CD8-positive, alpha-beta memory T cell (primary cell): ENCODE measurements at regions of chr3 and their contacts with region 1.

Region 1: DNA sequence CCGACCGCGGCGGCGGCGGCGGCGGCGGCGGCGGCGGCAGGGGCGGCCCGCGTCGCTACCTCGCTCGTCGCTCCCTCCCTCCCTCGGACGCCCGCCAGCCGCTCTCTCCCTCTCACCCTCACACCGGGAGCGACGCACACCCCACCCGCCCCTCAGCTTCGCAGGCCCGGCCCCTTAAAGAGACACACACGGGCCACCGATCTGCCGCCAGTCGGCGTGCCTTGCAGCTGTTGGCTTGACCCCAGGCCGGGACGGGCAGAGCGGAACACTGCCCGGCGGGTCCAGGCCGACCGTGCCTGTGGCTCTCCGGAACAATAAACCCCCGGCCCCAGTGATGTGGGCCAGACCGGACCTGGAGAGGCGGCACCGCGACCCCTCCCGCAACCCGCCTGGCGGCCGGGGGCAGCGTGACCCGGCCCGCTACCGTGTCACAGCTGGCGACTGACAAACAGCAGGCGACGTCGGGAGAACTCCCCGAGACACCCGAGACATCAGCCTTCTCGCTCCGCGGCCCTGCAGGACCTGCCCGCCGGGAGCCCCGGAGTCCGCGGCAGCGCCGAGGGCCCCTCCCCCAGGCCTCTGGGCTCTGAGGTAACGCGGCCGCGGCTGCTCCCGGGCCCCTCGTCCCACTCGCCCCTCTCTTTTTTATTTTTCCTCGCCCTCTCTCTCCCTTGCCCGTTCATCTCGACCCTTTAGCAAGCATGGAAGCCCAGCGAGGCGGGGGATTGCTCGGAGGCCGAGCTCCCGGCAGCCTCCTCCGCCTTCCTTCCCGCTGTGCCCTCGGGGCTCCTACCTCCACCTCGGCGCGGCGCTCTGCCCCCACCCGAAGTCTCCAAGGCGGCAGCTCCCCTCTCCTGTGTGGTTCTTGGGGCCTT is at the start of gene SETD2:
- DNase-seq: peak; percentile 80 to 91 (median 83)
- H3K4me3 ChIP-seq: peak within 1 kb of the TSS; percentile 95
- H3K4me3 Mint-ChIP-seq: peak within 1 kb of the TSS; percentile 98 to 99 (median 99)
- H3K27ac ChIP-seq: peak within 1 kb of the TSS; percentile 94
- H3K27ac Mint-ChIP-seq: peak within 1 kb of the TSS; percentile 98 to 100 (median 100)
- H3K4me1 ChIP-seq: peaks cover 48% of the 10 kb centered on the region
- H3K4me1 Mint-ChIP-seq: peaks cover 44 to 57% (median 52%) of the 10 kb centered on the region in 3 donors
- H3K27me3 ChIP-seq: no peaks in the 10 kb centered on the region
- H3K27me3 Mint-ChIP-seq: peaks cover 0 to 2% of the 10 kb centered on the region in 2 donors
- total RNA-seq, gene SETD2: 32.4 to 32.8 TPM

Region 2: GRCh38 chr3:47145272-47145671 is 19.0 kb before region 1 on chr3:
- CTCF ChIA-PET with region 1: interaction called, 5 read pairs
- POLR2A ChIA-PET with region 1: interaction called, 10 read pairs
- DNase-seq: no peak
- H3K4me3 ChIP-seq: no peak overlapping the region
- H3K4me3 Mint-ChIP-seq: peak overlapping the region in 3 of 7 donors; percentile 16 to 28 (median 20)
- H3K27ac ChIP-seq: no peak overlapping the region
- H3K27ac Mint-ChIP-seq: peak overlapping the region in 1 of 8 donors; percentile 89
- H3K4me1 ChIP-seq: peaks cover 41% of the 10 kb centered on the region
- H3K4me1 Mint-ChIP-seq: peaks cover 59 to 75% (median 67%) of the 10 kb centered on the region in 3 donors
- H3K27me3 ChIP-seq: no peaks in the 10 kb centered on the region
- H3K27me3 Mint-ChIP-seq: peaks cover 0 to 2% of the 10 kb centered on the region in 2 donors

Region 3: GRCh38 chr3:47210863-47211405 is 46.7 kb after region 1 on chr3:
- CTCF ChIA-PET with region 1: no interaction called
- POLR2A ChIA-PET with region 1: interaction called, 11 read pairs
- DNase-seq: no peak
- H3K4me3 ChIP-seq: no peak overlapping the region
- H3K4me3 Mint-ChIP-seq: no peak overlapping the region
- H3K27ac ChIP-seq: no peak overlapping the region
- H3K27ac Mint-ChIP-seq: no peak overlapping the region
- H3K4me1 ChIP-seq: no peaks in the 10 kb centered on the region
- H3K4me1 Mint-ChIP-seq: no peaks in the 10 kb centered on the region
- H3K27me3 ChIP-seq: no peaks in the 10 kb centered on the region
- H3K27me3 Mint-ChIP-seq: no peaks in the 10 kb centered on the region

Region 4: GRCh38 chr3:47227678-47228077 is 63.4 kb after region 1 on chr3:
- CTCF ChIA-PET with region 1: no interaction called
- POLR2A ChIA-PET with region 1: no interaction called
- DNase-seq: no peak
- H3K4me3 ChIP-seq: no peak overlapping the region
- H3K4me3 Mint-ChIP-seq: no peak overlapping the region
- H3K27ac ChIP-seq: no peak overlapping the region
- H3K27ac Mint-ChIP-seq: peak overlapping the region in 1 of 8 donors; percentile 23
- H3K4me1 ChIP-seq: no peaks in the 10 kb centered on the region
- H3K4me1 Mint-ChIP-seq: no peaks in the 10 kb centered on the region
- H3K27me3 ChIP-seq: no peaks in the 10 kb centered on the region
- H3K27me3 Mint-ChIP-seq: no peaks in the 10 kb centered on the region

Region 5: GRCh38 chr3:47282424-47283192 is 118.4 kb after region 1 on chr3 and contains the starts of genes KIF9 and KLHL18:
- CTCF ChIA-PET with region 1: interaction called, 4 read pairs
- POLR2A ChIA-PET with region 1: interaction called, 16 read pairs
- DNase-seq: peak; percentile 96 to 99 (median 97)
- H3K4me3 ChIP-seq: peak within 1 kb of the TSS; percentile 97
- H3K4me3 Mint-ChIP-seq: peak within 1 kb of the TSS; percentile 91 to 100 (median 99)
- H3K27ac ChIP-seq: peak within 1 kb of the TSS; percentile 100
- H3K27ac Mint-ChIP-seq: peak within 1 kb of the TSS; percentile 96 to 100 (median 100)
- H3K4me1 ChIP-seq: peaks cover 41% of the 10 kb centered on the region
- H3K4me1 Mint-ChIP-seq: peaks cover 31 to 53% (median 48%) of the 10 kb centered on the region in 3 donors
- H3K27me3 ChIP-seq: no peaks in the 10 kb centered on the region
- H3K27me3 Mint-ChIP-seq: peaks cover 0 to 6% of the 10 kb centered on the region in 2 donors
- total RNA-seq, gene KIF9: 5.8 to 7.2 TPM
- total RNA-seq, gene KLHL18: 44.5 to 46.8 TPM